Naive thymus-derived CD4-positive, alpha-beta T cell (primary cell): ENCODE measurements at regions of chr2 and their contacts with region 1.

Region 1: DNA sequence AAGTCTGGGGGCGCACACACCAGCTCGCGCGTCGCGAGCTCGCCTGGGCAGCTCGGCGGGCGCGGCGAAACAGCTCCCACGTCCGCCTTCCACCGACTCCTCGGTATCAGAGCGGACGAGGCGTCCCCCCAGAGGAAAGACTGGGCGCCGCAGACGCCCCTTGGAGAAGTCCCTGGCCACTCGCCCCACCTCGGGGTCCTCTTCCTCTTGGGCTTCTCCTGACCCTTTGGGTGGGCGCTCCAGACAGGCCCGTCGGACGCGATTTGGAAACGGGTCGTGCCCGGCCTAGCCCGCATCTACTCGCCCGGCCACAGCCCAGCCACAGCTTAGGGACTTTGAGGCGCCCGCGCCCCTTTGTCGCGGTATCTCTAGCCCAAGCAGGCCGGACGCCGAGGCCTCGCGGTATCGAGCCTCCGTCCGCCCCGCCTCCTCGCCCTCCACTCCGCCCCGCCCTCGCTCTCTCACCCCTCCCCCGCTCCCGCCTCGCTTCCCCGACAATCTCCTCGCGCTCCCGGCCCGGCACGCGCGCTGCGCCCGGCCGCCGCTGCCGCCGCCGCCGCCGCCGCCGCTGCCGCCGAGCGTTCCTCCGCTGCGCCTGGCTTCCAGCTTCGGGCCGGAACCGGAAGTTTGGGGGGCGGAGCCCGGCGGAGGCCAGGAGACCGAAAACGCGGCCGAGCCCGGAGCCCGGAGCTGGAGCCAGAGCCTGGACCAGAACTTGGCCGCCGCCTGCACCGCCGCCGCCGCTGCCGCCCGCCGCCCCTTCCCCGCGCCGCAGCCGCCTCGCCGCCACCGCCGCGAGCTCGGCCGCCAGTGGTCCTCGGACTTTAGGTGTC is 749 bp upstream of the ACVR2A start:
- DNase-seq: peak; percentile 77 to 90 (median 86)
- ATAC-seq: peak; percentile 89
- H3K4me3 ChIP-seq: peak overlapping the region; percentile 79
- H3K4me3 Mint-ChIP-seq: peak overlapping the region; percentile 88 to 99 (median 94)
- H3K27ac ChIP-seq: peak overlapping the region; percentile 66
- H3K27ac Mint-ChIP-seq: peak overlapping the region; percentile 83 to 97 (median 86)
- H3K4me1 ChIP-seq: peaks cover 15 to 31% of the 10 kb centered on the region in 2 donors
- H3K4me1 Mint-ChIP-seq: peaks cover 33 to 49% (median 36%) of the 10 kb centered on the region in 7 donors
- H3K27me3 ChIP-seq: no peaks in the 10 kb centered on the region
- H3K27me3 Mint-ChIP-seq: peaks cover 0 to 67% (median 5%) of the 10 kb centered on the region in 5 donors

Region 2: GRCh38 chr2:147082850-147083522 is 761.1 kb before region 1 on chr2:
- CTCF ChIA-PET with region 1: no interaction called
- POLR2A ChIA-PET with region 1: no interaction called
- intact Hi-C with region 1: loop called in 1 of 2 experiments (anchors 5 kb)
- DNase-seq: peak in 8 of 9 donors; percentile 11 to 57 (median 44)
- ATAC-seq: peak; percentile 68
- H3K4me3 ChIP-seq: no peak overlapping the region
- H3K4me3 Mint-ChIP-seq: no peak overlapping the region
- H3K27ac ChIP-seq: no peak overlapping the region
- H3K27ac Mint-ChIP-seq: no peak overlapping the region
- H3K4me1 ChIP-seq: no peaks in the 10 kb centered on the region
- H3K4me1 Mint-ChIP-seq: peaks cover 0 to 12% (median 0%) of the 10 kb centered on the region in 7 donors
- H3K27me3 ChIP-seq: no peaks in the 10 kb centered on the region
- H3K27me3 Mint-ChIP-seq: peaks cover 7 to 15% (median 9%) of the 10 kb centered on the region in 5 donors

Region 3: DNA sequence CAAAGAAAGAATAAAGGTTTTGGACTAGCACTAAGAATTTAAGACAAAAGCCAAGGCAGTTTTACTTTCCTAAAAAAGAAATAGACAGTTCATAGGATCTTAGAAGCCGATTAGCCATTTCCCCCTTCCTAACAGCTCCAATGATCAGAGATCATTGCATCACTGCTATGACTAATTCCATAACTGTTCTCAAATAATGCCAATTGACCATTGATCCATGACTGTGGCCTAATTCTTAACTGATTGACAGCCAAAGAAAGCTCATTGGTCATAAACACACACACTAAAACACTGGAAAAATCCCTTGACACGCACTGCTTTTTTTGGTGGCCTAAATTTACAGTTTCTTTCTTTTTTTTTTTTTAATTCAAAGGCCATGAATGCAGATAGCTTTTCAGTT is 344.3 kb before region 1 on chr2:
- CTCF ChIA-PET with region 1: no interaction called
- POLR2A ChIA-PET with region 1: interaction called, 3 read pairs
- intact Hi-C with region 1: loop called (anchors 2 to 10 kb)
- DNase-seq: no peak
- ATAC-seq: no peak
- H3K4me3 ChIP-seq: no peak overlapping the region
- H3K4me3 Mint-ChIP-seq: peak overlapping the region in 9 of 10 donors; percentile 40 to 80 (median 65)
- H3K27ac ChIP-seq: no peak overlapping the region
- H3K27ac Mint-ChIP-seq: peak overlapping the region in 8 of 9 donors; percentile 24 to 93 (median 65)
- H3K4me1 ChIP-seq: peaks cover 9 to 13% of the 10 kb centered on the region in 2 donors
- H3K4me1 Mint-ChIP-seq: peaks cover 23 to 61% (median 35%) of the 10 kb centered on the region in 7 donors
- H3K27me3 ChIP-seq: no peaks in the 10 kb centered on the region
- H3K27me3 Mint-ChIP-seq: no peaks in the 10 kb centered on the region

Region 4: GRCh38 chr2:147663153-147663961 is 180.7 kb before region 1 on chr2:
- CTCF ChIA-PET with region 1: no interaction called
- POLR2A ChIA-PET with region 1: interaction called, 8 read pairs
- intact Hi-C with region 1: loop called (anchors 2 kb)
- DNase-seq: peak in 7 of 9 donors; percentile 10 to 75 (median 58)
- ATAC-seq: peak; percentile 91
- H3K4me3 ChIP-seq: peak overlapping the region; percentile 48
- H3K4me3 Mint-ChIP-seq: peak overlapping the region; percentile 61 to 87 (median 82)
- H3K27ac ChIP-seq: peak overlapping the region; percentile 68
- H3K27ac Mint-ChIP-seq: peak overlapping the region; percentile 87 to 100 (median 93)
- H3K4me1 ChIP-seq: peaks cover 7 to 23% of the 10 kb centered on the region in 2 donors
- H3K4me1 Mint-ChIP-seq: peaks cover 17 to 59% (median 46%) of the 10 kb centered on the region in 7 donors
- H3K27me3 ChIP-seq: no peaks in the 10 kb centered on the region
- H3K27me3 Mint-ChIP-seq: no peaks in the 10 kb centered on the region

Region 5: DNA sequence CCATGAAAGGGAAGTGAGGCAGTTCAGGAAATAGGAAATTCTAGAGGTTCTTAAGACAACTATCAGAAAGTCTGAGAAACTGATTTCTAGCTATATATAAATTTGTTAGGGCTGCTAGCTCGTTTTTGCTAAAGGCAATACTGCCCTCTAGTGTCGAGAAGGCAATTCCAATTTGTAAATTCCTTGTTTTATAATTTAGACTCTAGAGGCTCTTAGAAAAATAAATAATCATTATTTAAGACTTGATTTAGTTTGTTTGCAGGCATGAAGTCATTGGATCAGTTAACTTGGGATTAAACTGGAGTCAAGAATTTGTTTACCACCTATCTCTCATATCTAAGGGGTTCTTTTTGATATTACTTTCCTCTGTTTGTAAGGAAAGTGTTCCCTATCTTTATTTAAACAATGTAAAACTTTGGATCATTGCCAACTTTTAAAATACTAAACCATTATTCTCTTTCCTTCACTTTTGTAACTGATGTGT is 67.0 kb after region 1 on chr2:
- CTCF ChIA-PET with region 1: interaction called, 3 read pairs
- POLR2A ChIA-PET with region 1: no interaction called
- intact Hi-C with region 1: loop called (anchors 1 to 5 kb)
- DNase-seq: peak in 7 of 9 donors; percentile 28 to 69 (median 57)
- ATAC-seq: peak; percentile 55
- H3K4me3 ChIP-seq: no peak overlapping the region
- H3K4me3 Mint-ChIP-seq: no peak overlapping the region
- H3K27ac ChIP-seq: no peak overlapping the region
- H3K27ac Mint-ChIP-seq: peak overlapping the region in 2 of 9 donors; percentile 18 to 71
- H3K4me1 ChIP-seq: no peaks in the 10 kb centered on the region
- H3K4me1 Mint-ChIP-seq: peaks cover 0 to 9% (median 4%) of the 10 kb centered on the region in 7 donors
- H3K27me3 ChIP-seq: no peaks in the 10 kb centered on the region
- H3K27me3 Mint-ChIP-seq: no peaks in the 10 kb centered on the region

Region 6: GRCh38 chr2:148524519-148524919 is 680.4 kb after region 1 on chr2:
- CTCF ChIA-PET with region 1: no interaction called
- POLR2A ChIA-PET with region 1: interaction called, 3 read pairs
- intact Hi-C with region 1: loop called in 1 of 2 experiments (anchors 5 kb)
- DNase-seq: peak in 8 of 9 donors; percentile 44 to 93 (median 86)
- ATAC-seq: peak; percentile 94
- H3K4me3 ChIP-seq: peak overlapping the region; percentile 28
- H3K4me3 Mint-ChIP-seq: peak overlapping the region; percentile 56 to 92 (median 76)
- H3K27ac ChIP-seq: peak overlapping the region; percentile 56
- H3K27ac Mint-ChIP-seq: peak overlapping the region; percentile 85 to 98 (median 94)
- H3K4me1 ChIP-seq: peaks cover 46 to 75% of the 10 kb centered on the region in 2 donors
- H3K4me1 Mint-ChIP-seq: peaks cover 58 to 90% (median 88%) of the 10 kb centered on the region in 7 donors
- H3K27me3 ChIP-seq: no peaks in the 10 kb centered on the region
- H3K27me3 Mint-ChIP-seq: no peaks in the 10 kb centered on the region